Right cardiac atrium (tissue), 5 donors: ENCODE measurements at regions of chr6 and their contacts with region 1.

Region 1: GRCh38 chr6:10954590-10955010 is 67.7 kb downstream of the SYCP2L start:
- DNase-seq: peak; percentile 70 to 86 (median 84)
- ATAC-seq: peak; percentile 72 to 83
- H3K4me3 ChIP-seq: no peak overlapping the region
- H3K27ac ChIP-seq: no peak overlapping the region
- H3K4me1 ChIP-seq: no peaks in the 10 kb centered on the region
- H3K27me3 ChIP-seq: no peaks in the 10 kb centered on the region

Region 2: DNA sequence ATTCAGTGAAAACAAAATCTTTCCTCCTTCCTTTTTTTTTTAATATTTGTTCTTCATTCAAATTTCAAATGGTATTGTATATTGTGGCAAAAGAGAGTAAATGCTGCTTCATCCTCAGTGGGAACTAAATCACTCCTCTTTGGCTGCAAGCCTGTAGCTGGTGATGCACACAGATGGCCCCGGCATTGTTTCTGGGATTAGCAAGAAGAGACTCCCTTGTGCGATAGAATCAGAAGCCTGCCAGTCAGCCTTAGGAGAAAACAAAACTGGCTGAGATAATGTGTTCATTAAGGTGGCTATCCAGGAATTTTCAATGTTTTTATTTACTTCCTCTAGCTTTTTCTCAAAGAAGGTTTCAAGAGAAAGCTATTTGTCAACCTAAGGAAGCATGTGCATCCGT is 110.2 kb after region 1 on chr6:
- intact Hi-C with region 1: loop called (anchors 5 kb)
- DNase-seq: no peak
- ATAC-seq: no peak
- H3K4me3 ChIP-seq: no peak overlapping the region
- H3K27ac ChIP-seq: no peak overlapping the region
- H3K4me1 ChIP-seq: no peaks in the 10 kb centered on the region
- H3K27me3 ChIP-seq: no peaks in the 10 kb centered on the region